ENCODE measurements at regions of chr3 and their contacts with region 1.

Region 1: GRCh38 chr3:113495035-113495434 is 19.9 kb downstream of the SPICE1 start:
- DNase-seq: no peak
- H3K4me3 ChIP-seq: no peak overlapping the region
- H3K27ac ChIP-seq: no peak overlapping the region
- H3K4me1 ChIP-seq: no peaks in the 10 kb centered on the region
- H3K27me3 ChIP-seq: no peaks in the 10 kb centered on the region
- CTCF ChIP-seq: peak; percentile 58

Region 2: GRCh38 chr3:113575206-113575605 is 80.2 kb after region 1 on chr3:
- intact Hi-C with region 1: loop called (anchors 5 kb)
- DNase-seq: no peak
- H3K4me3 ChIP-seq: no peak overlapping the region
- H3K27ac ChIP-seq: no peak overlapping the region
- H3K4me1 ChIP-seq: no peaks in the 10 kb centered on the region
- H3K27me3 ChIP-seq: peaks cover 34% of the 10 kb centered on the region
- CTCF ChIP-seq: no peak

Region 3: DNA sequence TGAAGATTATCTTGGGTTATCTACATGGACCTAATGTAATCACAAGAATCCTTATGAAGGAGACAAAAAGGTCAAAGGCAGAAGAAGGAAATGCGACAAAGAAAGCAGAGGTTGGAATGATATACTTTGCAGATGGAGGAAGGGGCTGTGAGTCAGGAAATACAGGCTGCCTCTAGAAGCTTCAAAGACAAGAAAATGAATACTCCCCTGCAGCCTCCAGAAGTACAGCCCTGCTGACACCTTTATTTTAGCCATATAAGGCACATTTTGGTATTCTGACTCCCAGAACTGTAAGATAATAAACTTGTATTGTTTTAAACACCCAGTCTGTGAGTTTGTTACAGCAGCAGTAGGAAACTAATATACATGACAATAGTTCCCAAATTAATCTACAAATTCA is 95.9 kb after region 1 on chr3:
- intact Hi-C with region 1: no loop called
- DNase-seq: no peak
- H3K4me3 ChIP-seq: no peak overlapping the region
- H3K27ac ChIP-seq: no peak overlapping the region
- H3K4me1 ChIP-seq: no peaks in the 10 kb centered on the region
- H3K27me3 ChIP-seq: no peaks in the 10 kb centered on the region
- CTCF ChIP-seq: no peak

Region 4: GRCh38 chr3:113626503-113627371 is 131.7 kb after region 1 on chr3:
- intact Hi-C with region 1: loop called (anchors 5 kb)
- DNase-seq: peak; percentile 42
- H3K4me3 ChIP-seq: peak overlapping the region; percentile 20
- H3K27ac ChIP-seq: no peak overlapping the region
- H3K4me1 ChIP-seq: peaks cover 8% of the 10 kb centered on the region
- H3K27me3 ChIP-seq: peaks cover 5% of the 10 kb centered on the region
- CTCF ChIP-seq: peak; percentile 94

Measured in left ventricle myocardium inferior (tissue), 1 donor.